Mammary epithelial cell (primary cell): ENCODE measurements at regions of chr1 and their contacts with region 1.

Region 1: DNA sequence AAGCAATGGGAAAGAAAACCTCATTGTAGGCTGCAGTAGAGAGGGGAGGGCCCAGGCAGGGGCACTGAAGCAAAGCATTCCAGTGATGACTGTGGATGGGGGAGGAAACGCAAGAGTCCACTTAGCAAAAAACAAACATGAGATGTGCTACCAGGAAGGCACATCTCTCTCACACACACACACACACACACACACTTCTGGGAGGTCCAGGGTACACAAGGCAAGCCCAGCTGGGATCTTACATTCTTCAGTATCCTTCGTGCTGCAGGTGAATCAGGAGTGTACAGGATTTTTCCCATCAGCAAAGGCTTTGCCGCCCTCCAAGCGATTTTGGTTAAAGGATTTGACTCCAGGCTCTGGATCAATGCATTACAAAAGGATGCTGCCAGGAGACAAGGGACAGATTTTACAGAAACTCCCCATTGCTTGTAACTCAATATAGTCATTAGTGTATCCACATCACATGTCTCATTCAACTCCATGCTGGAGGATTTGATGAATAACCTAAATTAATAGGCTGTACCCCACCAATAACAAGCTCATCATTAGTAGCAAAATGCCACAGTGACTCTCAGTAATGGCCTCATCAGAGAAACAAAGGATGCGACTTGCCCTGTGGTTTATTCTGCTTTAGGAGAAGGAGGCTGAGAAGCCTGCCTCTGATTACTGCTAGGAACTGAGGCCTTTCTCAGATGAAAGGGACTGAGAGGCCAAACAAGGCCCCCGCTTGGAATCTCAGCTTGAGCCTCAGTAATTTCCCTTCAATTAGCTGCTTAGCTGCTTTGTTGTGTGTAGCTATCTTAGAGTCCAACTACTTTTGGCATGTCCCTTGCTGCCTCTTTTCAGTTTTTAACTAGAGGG is 41.6 kb downstream of the ABCA4 start:
- DNase-seq: no peak
- H3K4me3 ChIP-seq: no peak overlapping the region
- H3K27ac ChIP-seq: no peak overlapping the region
- H3K4me1 ChIP-seq: peaks cover 18% of the 10 kb centered on the region
- H3K27me3 ChIP-seq: no peaks in the 10 kb centered on the region
- CTCF ChIP-seq: no peak

Region 2: DNA sequence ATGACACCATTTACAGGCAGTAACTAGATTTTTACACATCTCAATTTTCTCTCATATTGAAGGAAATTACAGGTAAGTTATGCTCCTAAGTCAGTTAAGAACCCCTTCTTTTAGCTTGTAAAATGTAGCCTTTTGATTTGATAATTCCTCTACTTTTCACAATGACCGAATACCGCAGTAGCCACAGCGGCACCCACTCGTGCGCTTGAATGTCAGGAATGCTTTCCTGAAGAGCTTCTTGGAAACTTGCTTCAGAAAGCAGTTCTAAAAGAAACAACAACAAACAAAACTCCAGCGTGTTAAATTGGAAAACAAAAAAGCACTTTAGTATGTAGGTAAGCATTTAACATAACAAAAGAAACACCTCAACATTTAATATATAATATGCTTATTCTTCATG is 190.4 kb before region 1 on chr1:
- CTCF ChIA-PET with region 1: no interaction called
- dilution Hi-C with region 1: no loop called
- in situ Hi-C with region 1: no loop called
- intact Hi-C with region 1: no loop called
- DNase-seq: no peak
- H3K4me3 ChIP-seq: no peak overlapping the region
- H3K27ac ChIP-seq: no peak overlapping the region
- H3K4me1 ChIP-seq: no peaks in the 10 kb centered on the region
- H3K27me3 ChIP-seq: no peaks in the 10 kb centered on the region
- CTCF ChIP-seq: no peak

Region 3: GRCh38 chr1:94115900-94116436 is 36.7 kb after region 1 on chr1:
- CTCF ChIA-PET with region 1: no interaction called
- dilution Hi-C with region 1: loop called (anchors 5 kb)
- in situ Hi-C with region 1: no loop called
- intact Hi-C with region 1: no loop called
- DNase-seq: no peak
- H3K4me3 ChIP-seq: no peak overlapping the region
- H3K27ac ChIP-seq: no peak overlapping the region
- H3K4me1 ChIP-seq: peaks cover 5% of the 10 kb centered on the region
- H3K27me3 ChIP-seq: no peaks in the 10 kb centered on the region
- CTCF ChIP-seq: no peak